Common myeloid progenitor, CD34-positive (primary cell): ENCODE measurements at regions of chr11 and their contacts with region 1.

Region 1: DNA sequence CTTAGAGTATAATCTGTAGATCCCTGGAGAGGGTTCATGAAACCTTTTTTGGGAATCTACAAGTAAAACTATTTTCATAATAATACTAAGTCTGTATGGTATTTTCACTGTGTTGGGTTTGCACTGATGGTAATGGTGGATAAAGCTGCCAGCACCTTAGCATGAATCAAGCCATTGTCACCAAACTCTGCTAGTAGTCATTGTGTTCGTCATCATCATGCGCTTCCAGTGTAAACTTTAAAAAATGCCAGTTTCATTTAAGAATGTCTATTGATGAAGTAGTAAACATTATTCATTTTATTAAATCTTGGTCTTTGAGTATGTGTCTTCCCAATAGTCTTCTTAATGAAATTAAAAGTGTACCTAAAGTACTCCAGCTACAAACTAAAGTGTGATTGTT is 15.0 kb downstream of the ALKBH3 start:
- DNase-seq: no peak
- H3K4me3 ChIP-seq: no peak overlapping the region
- H3K27ac ChIP-seq: no peak overlapping the region
- H3K4me1 ChIP-seq: no peaks in the 10 kb centered on the region
- H3K27me3 ChIP-seq: no peaks in the 10 kb centered on the region

Region 2: DNA sequence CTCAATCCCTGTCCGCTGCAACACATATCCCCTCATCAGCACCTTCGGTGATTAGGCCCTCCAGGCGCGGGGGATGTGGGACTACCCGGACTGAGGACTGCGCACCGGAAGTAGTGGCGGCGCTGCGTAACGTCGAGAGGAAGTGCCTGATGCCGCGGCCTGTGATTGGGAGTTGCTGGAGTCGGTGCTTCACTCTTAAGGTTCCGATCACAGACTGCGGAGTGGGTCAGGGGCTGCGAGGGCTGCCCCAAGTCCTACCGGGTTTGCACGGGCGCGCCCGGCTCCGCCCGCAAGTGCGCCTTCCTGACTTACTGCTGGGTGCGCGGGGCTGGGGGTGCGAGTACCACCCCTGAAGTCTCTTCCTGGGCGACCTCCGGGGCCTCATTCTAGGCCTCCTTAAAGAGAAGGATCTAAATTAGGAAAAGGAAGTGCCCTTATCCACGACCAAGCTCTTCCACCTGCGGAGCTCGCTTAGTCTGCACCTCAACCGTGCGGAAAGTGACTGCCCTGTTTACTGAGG is 14.9 kb before region 1 on chr11 and contains the start of gene ALKBH3:
- CTCF ChIA-PET with region 1: interaction called, 14 read pairs
- POLR2A ChIA-PET with region 1: no interaction called
- DNase-seq: peak; percentile 96 to 98 (median 98)
- H3K4me3 ChIP-seq: peak within 1 kb of the TSS; percentile 47 to 99 (median 93)
- H3K27ac ChIP-seq: peak within 1 kb of the TSS; percentile 60 to 85
- H3K4me1 ChIP-seq: peaks cover 10 to 19% (median 16%) of the 10 kb centered on the region in 4 experiments
- H3K27me3 ChIP-seq: peaks cover 4 to 26% (median 7%) of the 10 kb centered on the region in 5 experiments

Region 3: DNA sequence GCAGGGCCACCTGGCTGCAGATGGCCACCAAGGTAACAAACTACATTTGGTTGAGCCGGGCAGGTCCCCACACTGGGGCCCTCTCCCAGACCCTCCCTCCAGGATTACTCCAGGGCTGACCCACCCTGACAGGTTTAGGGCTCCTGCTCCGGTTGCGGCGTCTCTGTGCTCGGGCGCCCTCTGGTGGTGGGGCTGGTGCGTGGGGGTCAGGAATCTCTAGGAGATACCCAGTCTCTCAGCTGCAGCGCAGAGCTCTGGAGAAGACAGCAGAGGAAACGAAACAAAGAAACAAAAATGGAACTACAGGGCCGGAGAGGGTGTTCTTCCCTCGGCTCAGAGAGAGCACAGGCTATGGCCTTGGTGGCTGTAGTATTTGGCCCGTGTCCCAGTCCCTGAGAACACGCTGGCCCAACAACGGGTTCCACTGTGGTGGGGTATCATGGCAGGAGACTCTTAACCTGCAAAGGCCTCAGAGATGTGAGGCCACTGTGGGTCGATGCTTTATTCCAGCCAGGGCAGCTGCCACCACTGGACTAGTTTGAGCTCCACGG is 49.2 kb after region 1 on chr11:
- CTCF ChIA-PET with region 1: interaction called, 89 read pairs
- POLR2A ChIA-PET with region 1: interaction called, 3 read pairs
- DNase-seq: peak; percentile 62 to 69 (median 67)
- H3K4me3 ChIP-seq: peak overlapping the region in 2 of 7 experiments; percentile 3 to 78
- H3K27ac ChIP-seq: no peak overlapping the region
- H3K4me1 ChIP-seq: peaks cover 0 to 32% (median 25%) of the 10 kb centered on the region in 4 experiments
- H3K27me3 ChIP-seq: peaks cover 0 to 58% (median 27%) of the 10 kb centered on the region in 5 experiments

Region 4: GRCh38 chr11:44036811-44037657 is 141.4 kb after region 1 on chr11:
- CTCF ChIA-PET with region 1: interaction called, 17 read pairs
- POLR2A ChIA-PET with region 1: no interaction called
- DNase-seq: peak; percentile 54 to 77 (median 72)
- H3K4me3 ChIP-seq: no peak overlapping the region
- H3K27ac ChIP-seq: no peak overlapping the region
- H3K4me1 ChIP-seq: no peaks in the 10 kb centered on the region
- H3K27me3 ChIP-seq: peaks cover 0 to 2% (median 0%) of the 10 kb centered on the region in 5 experiments